ENCODE measurements at regions of chr18 and their contacts with region 1.

Region 1: DNA sequence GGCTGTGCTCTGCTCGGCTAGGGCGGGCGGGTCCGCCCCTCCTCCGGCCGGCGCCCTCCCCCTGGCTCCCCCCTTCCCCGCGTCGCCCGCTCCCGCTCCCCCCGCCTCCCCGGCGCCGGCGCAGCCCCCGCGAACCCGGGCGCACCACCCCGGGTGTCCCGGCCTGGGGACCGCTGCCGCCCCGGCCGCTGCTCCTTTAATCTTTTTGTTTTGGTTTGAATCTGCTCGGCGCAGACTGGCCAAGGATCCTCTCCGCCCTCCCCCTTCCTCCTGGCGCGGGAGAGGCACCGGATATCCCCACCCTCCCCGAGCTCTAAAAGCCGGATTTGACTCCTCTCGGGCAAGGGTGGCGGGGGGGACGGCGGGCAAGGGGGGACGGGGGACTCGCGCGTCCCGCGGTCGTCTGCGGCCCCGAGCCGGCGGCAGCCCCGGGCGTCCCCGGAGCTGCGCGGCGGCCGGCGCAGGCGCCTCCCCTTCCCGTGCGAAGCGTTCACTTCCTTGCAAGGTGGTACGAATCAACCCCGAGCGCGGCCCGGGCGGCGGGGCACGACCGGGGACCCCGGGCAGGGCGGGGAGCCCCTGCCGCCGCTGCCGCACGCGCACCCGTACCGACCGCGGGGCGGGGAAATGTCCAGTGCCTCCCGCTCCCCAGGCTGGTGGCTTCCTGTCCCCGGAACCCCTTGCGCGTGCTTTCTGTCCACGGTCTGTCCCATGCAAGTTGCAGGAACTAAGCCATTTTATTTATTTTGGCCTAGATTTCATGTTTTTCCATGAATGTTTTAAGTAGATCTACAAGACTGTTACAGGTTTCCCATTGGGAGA is at the start of gene PTGR3:
- DNase-seq: peak; percentile 89
- H3K4me3 ChIP-seq: peak within 1 kb of the TSS; percentile 73 to 97 (median 83)
- H3K27ac ChIP-seq: peak within 1 kb of the TSS; percentile 88
- H3K4me1 ChIP-seq: peaks cover 46% of the 10 kb centered on the region
- H3K27me3 ChIP-seq: no peaks in the 10 kb centered on the region
- CTCF ChIP-seq: no peak
- POLR2A ChIP-seq: no peak
- total RNA-seq, gene PTGR3: 18.3 and 21.9 TPM in 2 replicates

Region 2: DNA sequence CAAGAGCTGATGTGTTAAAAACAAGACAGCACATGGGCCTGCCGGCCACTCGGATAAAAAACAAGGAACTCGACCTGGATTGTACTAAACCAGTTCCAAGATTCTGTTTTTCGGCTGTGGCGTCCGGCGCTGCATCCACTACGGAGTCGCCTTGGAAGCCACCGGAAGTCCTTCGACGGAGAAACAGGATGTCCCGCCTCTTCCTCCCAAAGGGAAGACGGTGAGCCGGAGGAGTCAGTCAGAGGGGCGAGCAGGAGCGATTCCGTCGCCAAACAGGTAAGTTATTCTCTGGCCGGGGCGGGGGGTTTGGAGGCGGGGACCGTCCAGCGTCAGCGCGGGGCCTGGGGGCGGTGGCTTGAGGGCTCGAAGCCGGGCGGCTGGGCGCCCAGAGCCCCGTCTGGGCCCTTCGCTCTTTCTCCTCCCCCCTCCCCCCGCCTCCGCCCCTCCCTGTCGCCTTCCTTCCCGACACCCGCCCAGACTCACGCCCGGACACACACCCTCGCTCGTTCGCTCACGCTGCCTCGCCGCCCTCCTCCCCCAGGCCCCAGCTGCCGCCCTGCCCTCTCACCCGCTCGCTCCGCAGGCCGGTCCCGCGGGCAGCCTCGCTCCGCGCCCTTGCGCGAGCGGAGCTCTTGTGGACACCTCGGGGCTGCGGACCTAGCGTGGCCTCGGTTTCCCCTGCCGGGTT is 611.5 kb before region 1 on chr18 and contains the start of gene ZNF407:
- CTCF ChIA-PET with region 1: no interaction called
- POLR2A ChIA-PET with region 1: no interaction called
- dilution Hi-C with region 1: no loop called
- intact Hi-C with region 1: loop called (anchors 5 kb)
- DNase-seq: peak; percentile 91
- H3K4me3 ChIP-seq: peak within 1 kb of the TSS; percentile 88 to 98 (median 97)
- H3K27ac ChIP-seq: peak within 1 kb of the TSS; percentile 99
- H3K4me1 ChIP-seq: peaks cover 15% of the 10 kb centered on the region
- H3K27me3 ChIP-seq: no peaks in the 10 kb centered on the region
- CTCF ChIP-seq: no peak
- POLR2A ChIP-seq: peak; percentile 6
- total RNA-seq, gene ZNF407: 17.3 and 20.1 TPM in 2 replicates

Region 3: DNA sequence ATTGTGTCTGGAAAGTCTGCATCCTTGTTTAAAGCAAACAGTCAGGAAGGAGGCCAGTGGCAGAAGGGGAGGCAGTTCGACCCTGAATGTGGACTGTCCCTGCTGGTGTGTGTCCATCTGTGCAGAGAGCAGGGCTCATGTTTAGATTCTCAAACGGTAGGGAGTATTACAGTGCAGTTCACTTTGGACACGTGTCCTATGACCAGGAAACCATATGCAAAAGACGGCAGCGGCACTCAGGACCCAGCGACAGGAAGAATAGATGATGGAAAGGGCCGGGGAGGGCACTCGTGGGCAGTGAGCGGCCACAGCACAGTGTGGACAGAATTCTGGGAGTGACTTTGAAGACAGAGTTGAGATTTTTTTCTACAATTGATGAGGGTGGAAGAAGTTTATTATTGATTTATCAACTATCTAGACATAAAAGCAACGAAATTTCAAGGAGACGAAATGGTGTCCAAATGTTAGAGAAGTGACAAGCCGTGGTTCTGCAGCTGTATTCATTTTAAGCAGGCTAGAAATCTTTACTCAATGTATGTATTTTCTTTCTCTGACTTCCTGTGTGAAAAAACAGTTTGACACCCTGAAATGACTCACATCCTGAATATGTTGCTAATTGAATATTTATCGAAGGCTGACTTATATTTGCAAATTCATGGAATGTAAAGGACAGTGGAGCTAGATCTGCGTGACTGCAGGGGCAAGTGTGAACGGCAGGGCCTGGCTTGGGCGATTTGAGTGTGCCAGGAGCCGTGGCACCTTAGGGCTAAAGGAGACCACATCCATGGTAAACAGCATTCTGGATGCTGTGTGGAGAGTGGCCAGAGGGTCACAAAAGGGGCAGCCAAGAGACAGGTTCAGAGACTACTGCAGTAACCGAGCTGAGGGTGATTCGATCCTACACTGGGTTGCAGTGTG is 214.6 kb before region 1 on chr18:
- CTCF ChIA-PET with region 1: no interaction called
- POLR2A ChIA-PET with region 1: no interaction called
- dilution Hi-C with region 1: no loop called
- intact Hi-C with region 1: loop called (anchors 5 kb)
- DNase-seq: peak; percentile 75
- H3K4me3 ChIP-seq: peak overlapping the region in 1 of 3 experiments; percentile 19
- H3K27ac ChIP-seq: peak overlapping the region; percentile 82
- H3K4me1 ChIP-seq: peaks cover 39% of the 10 kb centered on the region
- H3K27me3 ChIP-seq: no peaks in the 10 kb centered on the region
- CTCF ChIP-seq: no peak
- POLR2A ChIP-seq: peak; percentile 39

Region 4: DNA sequence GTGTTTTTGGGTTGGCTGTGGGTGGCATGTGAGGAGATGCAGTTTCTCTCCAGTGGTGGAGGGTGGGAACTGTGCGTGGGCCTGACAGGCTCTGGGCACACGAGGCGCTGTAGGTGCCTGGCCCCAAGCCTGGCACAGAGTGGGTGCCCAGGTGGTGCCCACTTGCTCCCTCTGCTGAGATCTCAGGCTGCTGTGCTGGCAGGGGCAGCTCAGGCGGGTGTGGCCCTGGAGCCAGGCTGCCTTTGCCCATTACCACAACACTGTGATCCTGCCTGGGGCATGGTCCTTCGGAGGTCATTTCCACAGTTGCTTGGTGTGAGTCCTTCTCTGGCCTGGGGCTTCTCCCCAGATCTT is 21.7 kb after region 1 on chr18:
- CTCF ChIA-PET with region 1: interaction called, 10 read pairs
- POLR2A ChIA-PET with region 1: no interaction called
- dilution Hi-C with region 1: no loop called
- intact Hi-C with region 1: loop called (anchors 1 kb)
- DNase-seq: no peak
- H3K4me3 ChIP-seq: no peak overlapping the region
- H3K27ac ChIP-seq: peak overlapping the region; percentile 66
- H3K4me1 ChIP-seq: peaks cover 43% of the 10 kb centered on the region
- H3K27me3 ChIP-seq: no peaks in the 10 kb centered on the region
- CTCF ChIP-seq: no peak
- POLR2A ChIP-seq: no peak

Region 5: DNA sequence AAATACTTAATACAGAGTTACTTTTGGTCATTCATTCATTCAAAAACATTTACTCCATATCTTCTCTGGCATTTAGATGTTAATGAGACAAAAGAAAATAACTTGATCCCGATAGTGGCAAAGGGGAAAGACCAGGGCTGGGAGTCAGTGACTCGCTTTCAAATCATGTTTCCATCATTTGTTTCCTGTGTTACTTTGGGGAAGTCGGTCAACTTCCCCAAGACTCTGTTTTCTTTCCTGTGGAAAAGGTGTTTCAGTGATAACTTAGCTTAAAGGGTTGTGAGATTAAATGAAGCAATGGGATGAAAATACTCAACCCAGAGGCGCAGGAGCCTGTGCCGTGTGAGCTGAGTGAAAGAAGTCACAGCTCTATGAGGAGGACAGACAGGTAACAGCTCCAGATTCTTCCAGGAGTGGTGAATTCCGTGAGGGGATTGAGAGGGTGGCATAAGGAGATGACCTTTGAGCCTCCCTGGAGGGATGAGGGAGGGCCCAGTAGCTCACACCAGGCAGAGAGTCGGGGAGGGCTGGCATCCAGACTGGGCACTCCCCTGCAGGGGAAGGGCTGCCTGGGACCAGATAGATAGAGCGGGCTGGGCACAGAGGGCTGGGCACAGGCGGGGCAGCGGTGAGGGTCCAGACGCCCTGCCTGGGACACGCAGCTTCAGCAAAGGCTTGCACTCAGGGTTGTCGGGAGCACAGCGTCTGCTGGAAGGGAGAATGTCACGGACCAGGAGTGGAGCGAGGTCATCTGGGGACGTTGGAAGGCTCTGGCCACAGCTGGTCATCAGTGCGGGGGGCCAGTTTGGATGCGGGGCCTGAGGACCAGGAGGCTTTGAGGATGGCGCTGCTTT is 71.3 kb after region 1 on chr18:
- CTCF ChIA-PET with region 1: interaction called, 7 read pairs
- POLR2A ChIA-PET with region 1: interaction called, 6 read pairs
- dilution Hi-C with region 1: no loop called
- intact Hi-C with region 1: loop called (anchors 2 kb)
- DNase-seq: peak; percentile 94
- H3K4me3 ChIP-seq: peak overlapping the region in 2 of 3 experiments; percentile 24 to 40
- H3K27ac ChIP-seq: peak overlapping the region; percentile 86
- H3K4me1 ChIP-seq: peaks cover 29% of the 10 kb centered on the region
- H3K27me3 ChIP-seq: no peaks in the 10 kb centered on the region
- CTCF ChIP-seq: no peak
- POLR2A ChIP-seq: no peak

Region 6: GRCh38 chr18:75607701-75608100 is 398.4 kb after region 1 on chr18:
- CTCF ChIA-PET with region 1: no interaction called
- POLR2A ChIA-PET with region 1: no interaction called
- dilution Hi-C with region 1: no loop called
- intact Hi-C with region 1: no loop called
- DNase-seq: no peak
- H3K4me3 ChIP-seq: no peak overlapping the region
- H3K27ac ChIP-seq: no peak overlapping the region
- H3K4me1 ChIP-seq: no peaks in the 10 kb centered on the region
- H3K27me3 ChIP-seq: no peaks in the 10 kb centered on the region
- CTCF ChIP-seq: no peak
- POLR2A ChIP-seq: no peak

Region 7: DNA sequence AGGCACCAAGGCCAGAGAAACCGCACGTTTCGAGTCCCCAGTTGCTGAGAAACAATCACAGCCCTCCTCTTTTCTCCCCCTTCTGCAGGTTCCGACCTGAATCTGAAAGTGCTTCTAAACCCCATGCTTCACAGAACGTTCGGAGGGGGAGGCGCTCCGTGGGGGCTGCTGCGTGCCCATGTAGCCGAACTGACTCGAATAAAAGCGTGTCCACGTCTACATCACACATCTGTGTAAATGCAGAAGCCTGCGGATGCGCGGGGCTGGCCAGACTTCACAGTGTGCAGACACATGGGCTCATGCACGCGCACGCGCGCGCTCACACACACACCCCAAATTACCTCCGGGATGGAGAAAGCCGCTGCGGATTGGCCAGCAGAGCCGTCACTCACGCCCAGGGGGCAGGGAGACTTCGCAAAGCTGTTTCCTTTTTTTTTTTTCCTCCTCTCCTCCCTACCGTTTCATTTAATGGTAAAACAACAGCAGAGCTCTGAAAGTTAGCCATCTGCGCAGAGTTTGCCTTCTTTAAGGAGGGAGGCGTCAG is 1283.4 kb after region 1 on chr18:
- CTCF ChIA-PET with region 1: no interaction called
- POLR2A ChIA-PET with region 1: no interaction called
- dilution Hi-C with region 1: no loop called
- intact Hi-C with region 1: loop called (anchors 10 kb)
- DNase-seq: peak; percentile 98
- H3K4me3 ChIP-seq: peak overlapping the region; percentile 80 to 97 (median 97)
- H3K27ac ChIP-seq: peak overlapping the region; percentile 60
- H3K4me1 ChIP-seq: peaks cover 25% of the 10 kb centered on the region
- H3K27me3 ChIP-seq: peaks cover 9 to 10% of the 10 kb centered on the region in 2 experiments
- CTCF ChIP-seq: no peak
- POLR2A ChIP-seq: peak; percentile 20

Measured in endothelial cell of umbilical vein (primary cell).